CD8-positive, alpha-beta T cell (primary cell): ENCODE measurements at regions of chr1 and their contacts with region 1.

Region 1: GRCh38 chr1:187001198-187001889 is 172.6 kb downstream of the PLA2G4A start:
- DNase-seq: no peak
- ATAC-seq: no peak
- H3K4me3 ChIP-seq: no peak overlapping the region
- H3K4me3 Mint-ChIP-seq: no peak overlapping the region
- H3K27ac ChIP-seq: no peak overlapping the region
- H3K27ac Mint-ChIP-seq: no peak overlapping the region
- H3K4me1 ChIP-seq: no peaks in the 10 kb centered on the region
- H3K4me1 Mint-ChIP-seq: no peaks in the 10 kb centered on the region
- H3K27me3 ChIP-seq: no peaks in the 10 kb centered on the region
- H3K27me3 Mint-ChIP-seq: peaks cover 3% of the 10 kb centered on the region
- CTCF ChIP-seq: no peak

Region 2: GRCh38 chr1:187013582-187014200 is 12.3 kb after region 1 on chr1:
- CTCF ChIA-PET with region 1: no interaction called
- POLR2A ChIA-PET with region 1: interaction called, 3 read pairs
- intact Hi-C with region 1: loop called in 1 of 2 experiments (anchors 1 kb)
- DNase-seq: no peak
- ATAC-seq: no peak
- H3K4me3 ChIP-seq: no peak overlapping the region
- H3K4me3 Mint-ChIP-seq: no peak overlapping the region
- H3K27ac ChIP-seq: no peak overlapping the region
- H3K27ac Mint-ChIP-seq: no peak overlapping the region
- H3K4me1 ChIP-seq: no peaks in the 10 kb centered on the region
- H3K4me1 Mint-ChIP-seq: no peaks in the 10 kb centered on the region
- H3K27me3 ChIP-seq: no peaks in the 10 kb centered on the region
- H3K27me3 Mint-ChIP-seq: peaks cover 3% of the 10 kb centered on the region
- CTCF ChIP-seq: no peak

Region 3: GRCh38 chr1:187185396-187185795 is 184.1 kb after region 1 on chr1:
- CTCF ChIA-PET with region 1: no interaction called
- POLR2A ChIA-PET with region 1: no interaction called
- intact Hi-C with region 1: no loop called
- DNase-seq: no peak
- ATAC-seq: no peak
- H3K4me3 ChIP-seq: no peak overlapping the region
- H3K4me3 Mint-ChIP-seq: no peak overlapping the region
- H3K27ac ChIP-seq: no peak overlapping the region
- H3K27ac Mint-ChIP-seq: no peak overlapping the region
- H3K4me1 ChIP-seq: no peaks in the 10 kb centered on the region
- H3K4me1 Mint-ChIP-seq: no peaks in the 10 kb centered on the region
- H3K27me3 ChIP-seq: no peaks in the 10 kb centered on the region
- H3K27me3 Mint-ChIP-seq: no peaks in the 10 kb centered on the region
- CTCF ChIP-seq: no peak